Endothelial cell of umbilical vein (primary cell): ENCODE measurements at regions of chr14 and their contacts with region 1.

Region 1: GRCh38 chr14:101707068-101707842 is 54.3 kb upstream of the PPP2R5C start:
- DNase-seq: peak; percentile 82
- H3K4me3 ChIP-seq: no peak overlapping the region
- H3K27ac ChIP-seq: no peak overlapping the region
- H3K4me1 ChIP-seq: no peaks in the 10 kb centered on the region
- H3K27me3 ChIP-seq: peaks cover 20 to 41% of the 10 kb centered on the region in 2 experiments
- CTCF ChIP-seq: peak; percentile 67 to 75
- POLR2A ChIP-seq: no peak

Region 2: GRCh38 chr14:101250336-101250947 is 456.8 kb before region 1 on chr14:
- CTCF ChIA-PET with region 1: no interaction called
- POLR2A ChIA-PET with region 1: no interaction called
- dilution Hi-C with region 1: no loop called
- intact Hi-C with region 1: no loop called
- DNase-seq: no peak
- H3K4me3 ChIP-seq: no peak overlapping the region
- H3K27ac ChIP-seq: no peak overlapping the region
- H3K4me1 ChIP-seq: no peaks in the 10 kb centered on the region
- H3K27me3 ChIP-seq: peaks cover 0 to 1% of the 10 kb centered on the region in 2 experiments
- CTCF ChIP-seq: no peak
- POLR2A ChIP-seq: no peak

Region 3: DNA sequence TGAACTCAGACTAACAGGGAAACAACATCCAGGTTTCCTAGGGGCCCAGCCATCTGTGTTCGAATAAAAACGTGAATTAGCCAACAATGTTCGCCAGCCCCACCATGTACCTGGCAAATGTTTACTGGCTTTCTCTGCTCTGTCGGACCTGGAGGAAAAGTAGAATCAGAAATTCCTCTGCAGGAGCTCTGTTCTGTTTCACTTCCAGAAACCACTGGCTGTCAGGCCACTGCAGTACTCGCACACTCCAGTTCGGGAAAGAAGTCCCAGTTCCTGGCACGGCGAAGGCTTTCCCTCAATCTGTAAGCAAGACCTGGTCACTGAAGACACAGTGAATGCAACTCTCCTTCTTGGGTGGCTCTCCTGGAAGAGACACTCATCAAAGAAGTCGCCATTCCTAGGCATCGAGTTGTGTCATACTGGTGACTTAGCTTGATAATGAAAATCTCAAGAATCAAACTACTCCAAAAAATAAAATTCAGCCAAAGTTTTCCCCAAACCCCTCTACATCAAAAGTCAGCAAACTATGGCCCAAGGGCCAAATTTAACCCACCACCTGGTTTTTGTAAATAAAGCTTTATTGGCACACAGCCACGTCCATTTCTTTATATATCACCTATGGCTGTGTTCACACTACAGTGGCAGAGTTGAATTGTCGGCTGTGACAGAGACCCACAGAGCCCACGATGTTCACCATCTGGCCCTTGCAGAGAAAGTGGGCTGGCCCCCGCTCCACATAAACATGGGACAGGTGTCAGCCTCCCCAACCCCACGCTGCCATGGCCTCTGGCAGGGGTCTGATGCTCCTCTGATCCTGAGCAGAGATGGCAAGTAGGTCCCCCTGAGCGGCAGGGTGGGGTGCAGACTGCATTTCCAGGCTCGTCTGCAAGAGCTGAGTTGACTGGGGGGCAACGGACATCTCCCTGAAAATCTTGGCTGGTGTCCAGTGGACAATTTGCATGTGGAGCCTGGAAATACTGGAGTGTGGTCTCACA is 335.2 kb before region 1 on chr14:
- CTCF ChIA-PET with region 1: no interaction called
- POLR2A ChIA-PET with region 1: no interaction called
- dilution Hi-C with region 1: no loop called
- intact Hi-C with region 1: no loop called
- DNase-seq: no peak
- H3K4me3 ChIP-seq: no peak overlapping the region
- H3K27ac ChIP-seq: no peak overlapping the region
- H3K4me1 ChIP-seq: no peaks in the 10 kb centered on the region
- H3K27me3 ChIP-seq: no peaks in the 10 kb centered on the region
- CTCF ChIP-seq: no peak
- POLR2A ChIP-seq: no peak

Region 4: GRCh38 chr14:101529079-101529478 is 178.2 kb before region 1 on chr14:
- CTCF ChIA-PET with region 1: no interaction called
- POLR2A ChIA-PET with region 1: no interaction called
- dilution Hi-C with region 1: no loop called
- intact Hi-C with region 1: no loop called
- DNase-seq: no peak
- H3K4me3 ChIP-seq: no peak overlapping the region
- H3K27ac ChIP-seq: no peak overlapping the region
- H3K4me1 ChIP-seq: no peaks in the 10 kb centered on the region
- H3K27me3 ChIP-seq: no peaks in the 10 kb centered on the region
- CTCF ChIP-seq: no peak
- POLR2A ChIP-seq: no peak

Region 5: DNA sequence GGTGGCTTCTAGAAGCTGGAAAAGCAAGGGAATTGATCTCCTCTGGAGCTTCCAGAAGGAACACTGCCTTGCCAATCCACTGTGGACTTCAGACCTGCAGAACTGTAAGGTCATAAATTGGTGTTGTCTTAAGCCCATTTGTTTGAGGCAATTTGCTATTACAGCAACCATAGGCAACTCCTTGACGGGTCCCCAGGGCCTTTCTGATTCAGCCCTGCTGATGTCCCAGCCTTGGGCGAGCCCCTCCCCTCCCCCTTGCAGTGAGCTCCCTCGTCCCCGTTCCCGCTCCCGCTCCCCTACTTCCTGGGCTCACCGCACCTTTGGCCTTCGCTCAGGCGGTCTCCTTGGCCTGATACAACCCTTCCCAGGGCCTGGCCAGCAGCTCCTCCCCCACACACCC is 164.9 kb before region 1 on chr14:
- CTCF ChIA-PET with region 1: no interaction called
- POLR2A ChIA-PET with region 1: no interaction called
- dilution Hi-C with region 1: no loop called
- intact Hi-C with region 1: no loop called
- DNase-seq: no peak
- H3K4me3 ChIP-seq: no peak overlapping the region
- H3K27ac ChIP-seq: no peak overlapping the region
- H3K4me1 ChIP-seq: no peaks in the 10 kb centered on the region
- H3K27me3 ChIP-seq: no peaks in the 10 kb centered on the region
- CTCF ChIP-seq: no peak
- POLR2A ChIP-seq: no peak

Region 6: GRCh38 chr14:101721951-101722661 is 14.9 kb after region 1 on chr14:
- CTCF ChIA-PET with region 1: interaction called, 7 read pairs
- POLR2A ChIA-PET with region 1: interaction called, 4 read pairs
- dilution Hi-C with region 1: no loop called
- intact Hi-C with region 1: loop called (anchors 2 kb)
- DNase-seq: peak; percentile 80
- H3K4me3 ChIP-seq: no peak overlapping the region
- H3K27ac ChIP-seq: no peak overlapping the region
- H3K4me1 ChIP-seq: peaks cover 12% of the 10 kb centered on the region
- H3K27me3 ChIP-seq: peaks cover 26 to 28% of the 10 kb centered on the region in 2 experiments
- CTCF ChIP-seq: no peak
- POLR2A ChIP-seq: no peak

Region 7: GRCh38 chr14:101761032-101761880 is 54.0 kb after region 1 on chr14 and contains the start of gene PPP2R5C:
- CTCF ChIA-PET with region 1: interaction called, 22 read pairs
- POLR2A ChIA-PET with region 1: no interaction called
- dilution Hi-C with region 1: no loop called
- intact Hi-C with region 1: loop called (anchors 2 kb)
- DNase-seq: peak; percentile 83
- H3K4me3 ChIP-seq: peak within 1 kb of the TSS; percentile 50 to 64 (median 52)
- H3K27ac ChIP-seq: no peak within 1 kb of the TSS
- H3K4me1 ChIP-seq: peaks cover 6% of the 10 kb centered on the region
- H3K27me3 ChIP-seq: peaks cover 13 to 32% of the 10 kb centered on the region in 2 experiments
- CTCF ChIP-seq: no peak
- POLR2A ChIP-seq: no peak
- total RNA-seq, gene PPP2R5C: 83.6 and 89.0 TPM in 2 replicates

Region 8: GRCh38 chr14:101947906-101948665 is 240.8 kb after region 1 on chr14:
- CTCF ChIA-PET with region 1: interaction called, 11 read pairs
- POLR2A ChIA-PET with region 1: interaction called, 3 read pairs
- dilution Hi-C with region 1: no loop called
- intact Hi-C with region 1: loop called (anchors 2 kb)
- DNase-seq: peak; percentile 100
- H3K4me3 ChIP-seq: peak overlapping the region; percentile 34 to 74 (median 53)
- H3K27ac ChIP-seq: peak overlapping the region; percentile 80
- H3K4me1 ChIP-seq: peaks cover 10% of the 10 kb centered on the region
- H3K27me3 ChIP-seq: peaks cover 6 to 8% of the 10 kb centered on the region in 2 experiments
- CTCF ChIP-seq: no peak
- POLR2A ChIP-seq: peak; percentile 88

Region 9: DNA sequence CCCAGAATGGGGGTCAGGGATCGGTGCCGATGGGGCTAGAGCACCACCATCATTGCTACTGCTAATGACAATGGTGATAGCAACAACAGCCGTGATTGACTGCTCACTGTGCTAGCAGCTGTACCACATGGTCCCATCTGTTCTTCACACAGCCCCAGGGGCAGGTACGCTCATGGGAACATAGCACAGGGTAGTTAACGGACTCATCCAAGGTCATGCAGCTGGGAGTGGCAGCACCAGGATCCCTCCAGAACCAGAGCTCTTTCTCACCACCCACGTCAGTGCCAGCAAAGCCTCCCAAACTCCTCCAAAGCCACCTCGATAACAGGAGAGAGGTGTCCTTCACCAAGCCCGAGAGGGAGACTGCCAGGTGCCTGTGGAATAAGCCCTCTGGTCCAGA is 245.9 kb after region 1 on chr14:
- CTCF ChIA-PET with region 1: interaction called, 11 read pairs
- POLR2A ChIA-PET with region 1: no interaction called
- dilution Hi-C with region 1: no loop called
- intact Hi-C with region 1: loop called (anchors 2 kb)
- DNase-seq: no peak
- H3K4me3 ChIP-seq: no peak overlapping the region
- H3K27ac ChIP-seq: no peak overlapping the region
- H3K4me1 ChIP-seq: peaks cover 8% of the 10 kb centered on the region
- H3K27me3 ChIP-seq: no peaks in the 10 kb centered on the region
- CTCF ChIP-seq: no peak
- POLR2A ChIP-seq: no peak

Region 10: GRCh38 chr14:101964297-101965144 is 257.3 kb after region 1 on chr14 and contains the start of gene DYNC1H1:
- CTCF ChIA-PET with region 1: interaction called, 5 read pairs
- POLR2A ChIA-PET with region 1: no interaction called
- dilution Hi-C with region 1: no loop called
- intact Hi-C with region 1: loop called (anchors 1 kb)
- DNase-seq: peak; percentile 96
- H3K4me3 ChIP-seq: peak within 1 kb of the TSS; percentile 75 to 95 (median 90)
- H3K27ac ChIP-seq: peak within 1 kb of the TSS; percentile 64
- H3K4me1 ChIP-seq: peaks cover 14% of the 10 kb centered on the region
- H3K27me3 ChIP-seq: no peaks in the 10 kb centered on the region
- CTCF ChIP-seq: no peak
- POLR2A ChIP-seq: peak; percentile 93
- total RNA-seq, gene DYNC1H1: 596 and 648 TPM in 2 replicates

Region 11: DNA sequence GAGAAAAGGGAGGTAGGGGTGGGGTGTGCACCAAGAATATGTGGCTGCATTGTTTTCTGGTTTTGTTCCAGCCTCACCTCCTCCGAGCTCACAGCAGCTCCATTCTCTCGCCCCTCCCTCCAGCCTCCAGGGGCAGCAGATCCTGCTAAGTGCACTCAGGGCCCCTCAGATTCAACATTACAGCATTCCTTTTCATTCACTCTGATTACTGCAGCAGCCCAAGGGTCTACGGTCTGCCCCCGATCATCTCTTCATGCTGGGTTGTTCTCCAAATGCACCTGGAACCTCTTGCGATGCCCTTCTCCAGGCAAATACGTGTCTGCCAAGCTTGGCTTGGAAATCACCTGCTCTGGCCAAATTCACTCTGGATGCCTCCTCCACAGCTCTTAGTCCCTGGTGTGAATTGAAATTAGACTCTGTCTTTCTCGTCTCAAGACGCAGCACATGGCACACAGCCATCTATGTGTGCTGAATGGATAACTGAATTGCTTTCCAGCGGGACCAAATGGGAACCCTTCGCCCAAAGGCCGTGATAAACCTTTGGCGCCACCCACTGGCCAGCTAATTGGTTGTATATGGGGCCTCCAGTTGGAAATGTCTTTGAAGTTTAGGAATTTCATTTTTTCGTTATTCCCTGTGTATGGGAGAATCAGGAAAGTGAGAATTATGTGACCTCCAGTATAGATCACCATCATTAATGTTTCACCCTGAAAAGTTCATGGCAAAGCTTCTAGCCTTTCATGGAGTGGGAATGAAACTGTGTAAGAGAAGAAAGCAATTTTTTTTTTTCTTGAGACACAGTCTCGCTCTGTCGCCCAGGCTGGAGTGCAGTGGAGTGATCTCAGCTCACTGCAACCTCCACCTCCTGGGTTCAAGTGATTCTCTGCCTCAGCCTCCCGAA is 389.2 kb after region 1 on chr14:
- CTCF ChIA-PET with region 1: interaction called, 12 read pairs
- POLR2A ChIA-PET with region 1: no interaction called
- dilution Hi-C with region 1: no loop called
- intact Hi-C with region 1: loop called (anchors 10 kb)
- DNase-seq: peak; percentile 79
- H3K4me3 ChIP-seq: no peak overlapping the region
- H3K27ac ChIP-seq: no peak overlapping the region
- H3K4me1 ChIP-seq: no peaks in the 10 kb centered on the region
- H3K27me3 ChIP-seq: no peaks in the 10 kb centered on the region
- CTCF ChIP-seq: peak; percentile 81 to 88
- POLR2A ChIP-seq: no peak